ENCODE measurements at regions of chr17 and their contacts with region 1.

Region 1: DNA sequence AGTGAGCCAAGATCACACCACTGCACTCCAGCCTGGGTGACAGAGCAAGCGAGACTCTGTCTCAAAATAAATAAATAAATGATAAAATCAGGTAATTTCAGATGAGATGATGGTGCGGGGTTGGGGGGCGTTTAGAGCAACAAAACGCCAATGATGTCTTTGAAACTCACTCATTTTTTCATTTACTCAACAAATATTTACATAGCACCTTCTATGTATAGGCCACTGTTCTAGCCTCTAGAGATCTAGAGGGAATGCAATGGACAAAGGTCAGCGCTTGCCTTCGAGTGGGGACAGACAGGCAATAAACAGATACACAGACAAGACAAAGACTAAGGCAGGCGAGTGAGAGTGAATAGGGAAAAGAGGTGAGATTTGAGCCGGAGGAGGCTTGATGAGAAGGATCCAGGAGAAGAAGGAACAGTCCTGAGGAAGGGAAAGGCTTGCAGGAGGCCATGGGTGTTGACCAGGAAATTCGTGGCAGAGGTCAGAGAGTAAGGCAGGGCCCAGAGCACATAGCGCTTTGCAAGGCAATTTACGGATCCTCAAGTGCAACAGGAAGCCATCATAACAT is 14.1 kb downstream of the ALDH3A1 start:
- DNase-seq: no peak
- ATAC-seq: peak in 1 of 2 experiments; percentile 12; a peak in 2 of 6 replicates
- H3K4me3 ChIP-seq: no peak overlapping the region
- H3K27ac ChIP-seq: peak overlapping the region; percentile 0 to 68; a peak in 4 of 6 replicates
- H3K4me1 ChIP-seq: peaks cover 49% of the 10 kb centered on the region
- CTCF ChIP-seq: no peak
- EP300 ChIP-seq: no peak
- POLR2A ChIP-seq: no peak
- RAD21 ChIP-seq: no peak

Region 2: DNA sequence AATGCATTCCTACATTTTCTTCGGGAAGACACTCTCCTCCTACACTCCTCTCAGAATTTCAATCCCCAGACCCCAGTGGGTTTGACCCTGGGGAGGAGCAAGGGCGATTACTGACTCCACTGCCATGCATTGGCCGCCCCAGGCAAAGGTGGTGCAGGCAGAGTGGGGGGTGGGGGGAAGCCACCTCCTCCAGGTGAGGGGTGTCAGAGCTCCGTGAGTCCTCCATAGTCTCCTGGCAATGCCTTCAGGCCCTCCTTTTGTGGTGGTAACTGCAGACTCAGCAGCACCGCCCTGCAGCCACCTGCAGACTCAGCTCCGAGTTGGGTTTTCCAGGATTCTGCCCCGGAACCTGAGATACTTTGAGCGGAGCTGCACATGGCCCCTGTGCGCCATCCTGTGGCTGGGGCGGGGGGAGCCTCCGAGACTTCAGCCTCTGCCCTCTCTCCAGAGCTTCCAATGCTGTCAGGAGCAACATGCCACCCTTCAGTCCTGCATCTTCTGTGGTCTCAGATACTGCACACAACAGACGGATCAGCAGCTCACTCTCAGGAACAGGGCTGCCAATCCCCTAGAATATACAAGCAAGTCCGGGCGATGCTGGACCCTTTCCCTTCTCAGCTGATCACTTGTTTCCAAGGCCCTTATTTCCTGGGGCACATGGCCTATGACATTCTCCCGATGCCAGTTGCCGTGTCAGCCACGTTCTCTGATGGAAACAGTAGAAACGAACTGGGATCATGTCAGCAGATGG is 15.3 kb before region 1 on chr17:
- CTCF ChIA-PET with region 1: interaction called, 32 read pairs
- POLR2A ChIA-PET with region 1: no interaction called
- DNase-seq: peak in 1 of 2 experiments; percentile 65
- ATAC-seq: peak; percentile 40 to 67
- H3K4me3 ChIP-seq: no peak overlapping the region
- H3K27ac ChIP-seq: peak overlapping the region; percentile 49 to 82
- H3K4me1 ChIP-seq: peaks cover 57% of the 10 kb centered on the region
- CTCF ChIP-seq: peak; percentile 43
- EP300 ChIP-seq: no peak
- POLR2A ChIP-seq: no peak
- RAD21 ChIP-seq: peak; percentile 62 to 75